Body of pancreas (tissue), 4 donors: ENCODE measurements at regions of chr2 and their contacts with region 1.

Region 1: GRCh38 chr2:64653349-64654062 is at the start of gene SERTAD2:
- DNase-seq: peak; percentile 89 to 92 (median 92)
- ATAC-seq: peak; percentile 84
- H3K4me3 ChIP-seq: peak within 1 kb of the TSS; percentile 54 to 85
- H3K27ac ChIP-seq: peak within 1 kb of the TSS; percentile 98 to 100 (median 100)
- H3K4me1 ChIP-seq: peaks cover 47% of the 10 kb centered on the region
- H3K27me3 ChIP-seq: no peaks in the 10 kb centered on the region
- CTCF ChIP-seq: peak in 3 of 7 experiments; percentile 2 to 33 (median 16)
- POLR2A ChIP-seq: peak; percentile 94 to 97 (median 96)
- total RNA-seq, gene SERTAD2: 3.3 to 6.7 TPM

Region 2: DNA sequence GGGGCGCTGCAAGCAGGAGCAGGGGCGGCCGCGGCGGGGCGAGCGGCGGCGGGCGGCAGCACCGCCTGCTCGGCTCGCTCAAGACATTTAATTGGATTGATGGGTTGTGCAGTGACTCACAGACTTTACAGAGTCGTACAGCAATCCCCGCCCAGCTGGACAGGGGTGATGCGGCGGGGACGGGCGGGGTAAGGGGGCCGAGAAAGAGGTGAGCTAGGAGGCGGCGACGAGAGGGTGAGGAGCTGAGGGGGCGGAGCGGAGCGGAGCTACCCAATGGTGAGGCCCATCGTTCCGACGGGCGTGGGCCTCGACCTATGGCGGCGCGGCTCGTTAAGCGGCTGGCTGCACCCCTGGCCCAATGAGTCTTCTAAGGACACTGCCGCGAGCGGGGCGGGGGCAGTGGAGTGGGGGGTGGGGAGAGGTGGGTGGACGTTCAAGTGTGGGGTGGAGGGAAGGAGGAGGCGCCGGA is 97.3 kb after region 1 on chr2:
- intact Hi-C with region 1: loop called (anchors 10 kb)
- DNase-seq: peak in 2 of 4 donors; percentile 99
- ATAC-seq: peak; percentile 86
- H3K4me3 ChIP-seq: peak overlapping the region; percentile 57 to 67
- H3K27ac ChIP-seq: peak overlapping the region; percentile 94 to 97 (median 96)
- H3K4me1 ChIP-seq: peaks cover 14% of the 10 kb centered on the region
- H3K27me3 ChIP-seq: no peaks in the 10 kb centered on the region
- CTCF ChIP-seq: peak in 1 of 7 experiments; percentile 27
- POLR2A ChIP-seq: peak; percentile 96 to 98 (median 97)

Region 3: GRCh38 chr2:64975232-64975821 is 321.8 kb after region 1 on chr2:
- intact Hi-C with region 1: no loop called
- DNase-seq: peak in 2 of 4 donors; percentile 11 to 14
- ATAC-seq: no peak
- H3K4me3 ChIP-seq: no peak overlapping the region
- H3K27ac ChIP-seq: no peak overlapping the region
- H3K4me1 ChIP-seq: peaks cover 6% of the 10 kb centered on the region
- H3K27me3 ChIP-seq: no peaks in the 10 kb centered on the region
- CTCF ChIP-seq: no peak
- POLR2A ChIP-seq: no peak